Activated CD8-positive, alpha-beta T cell treated with anti-CD3 and anti-CD28 coated beads for 36 hours (primary cell): ENCODE measurements at regions of chr18 and their contacts with region 1.

Region 1: GRCh38 chr18:63439334-63439733 is 17.1 kb upstream of the VPS4B start:
- DNase-seq: peak; percentile 58
- ATAC-seq: peak; percentile 75
- H3K4me3 Mint-ChIP-seq: no peak overlapping the region
- H3K27ac Mint-ChIP-seq: no peak overlapping the region
- H3K4me1 Mint-ChIP-seq: no peaks in the 10 kb centered on the region
- H3K27me3 Mint-ChIP-seq: peaks cover 2% of the 10 kb centered on the region
- CTCF ChIP-seq: peak; percentile 92

Region 2: GRCh38 chr18:63339920-63340484 is 99.3 kb before region 1 on chr18:
- CTCF ChIA-PET with region 1: interaction called, 99 read pairs
- POLR2A ChIA-PET with region 1: no interaction called
- intact Hi-C with region 1: loop called (anchors 5 kb)
- DNase-seq: peak; percentile 75
- ATAC-seq: peak; percentile 66
- H3K4me3 Mint-ChIP-seq: no peak overlapping the region
- H3K27ac Mint-ChIP-seq: no peak overlapping the region
- H3K4me1 Mint-ChIP-seq: peaks cover 10% of the 10 kb centered on the region
- H3K27me3 Mint-ChIP-seq: no peaks in the 10 kb centered on the region
- CTCF ChIP-seq: peak; percentile 73

Region 3: GRCh38 chr18:63367053-63367953 is 72.0 kb before region 1 on chr18 and contains the start of gene KDSR:
- CTCF ChIA-PET with region 1: interaction called, 36 read pairs
- POLR2A ChIA-PET with region 1: interaction called, 3 read pairs
- intact Hi-C with region 1: no loop called
- DNase-seq: peak; percentile 86
- ATAC-seq: peak; percentile 84
- H3K4me3 Mint-ChIP-seq: peak within 1 kb of the TSS; percentile 81
- H3K27ac Mint-ChIP-seq: peak within 1 kb of the TSS; percentile 86
- H3K4me1 Mint-ChIP-seq: peaks cover 29% of the 10 kb centered on the region
- H3K27me3 Mint-ChIP-seq: no peaks in the 10 kb centered on the region
- CTCF ChIP-seq: no peak
- total RNA-seq, gene KDSR: 53.4 TPM

Region 4: DNA sequence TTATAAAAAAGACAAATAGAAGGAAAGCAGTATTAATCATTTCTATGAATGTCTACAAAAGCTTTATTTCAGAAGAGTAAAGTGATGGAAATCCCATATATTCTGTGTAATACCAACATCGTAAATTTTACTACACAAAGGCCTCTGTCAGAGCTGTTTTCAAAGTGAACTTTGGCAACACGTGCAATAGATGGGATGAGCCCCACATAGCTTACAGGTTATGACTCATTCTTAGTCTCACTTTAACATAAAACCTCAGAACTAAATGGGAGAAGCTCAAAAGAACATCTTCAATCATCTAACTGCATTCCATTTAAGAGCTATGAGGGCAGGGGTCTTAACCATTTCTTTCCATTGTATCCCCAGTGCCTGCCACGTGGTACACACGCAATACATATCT is 28.5 kb before region 1 on chr18:
- CTCF ChIA-PET with region 1: interaction called, 11 read pairs
- POLR2A ChIA-PET with region 1: no interaction called
- intact Hi-C with region 1: no loop called
- DNase-seq: no peak
- ATAC-seq: peak; percentile 84
- H3K4me3 Mint-ChIP-seq: no peak overlapping the region
- H3K27ac Mint-ChIP-seq: peak overlapping the region; percentile 84
- H3K4me1 Mint-ChIP-seq: peaks cover 53% of the 10 kb centered on the region
- H3K27me3 Mint-ChIP-seq: no peaks in the 10 kb centered on the region
- CTCF ChIP-seq: no peak

Region 5: GRCh38 chr18:63422087-63422809 is 17.1 kb before region 1 on chr18 and contains the start of gene VPS4B:
- CTCF ChIA-PET with region 1: interaction called, 59 read pairs
- POLR2A ChIA-PET with region 1: interaction called, 5 read pairs
- intact Hi-C with region 1: no loop called
- DNase-seq: peak; percentile 100
- ATAC-seq: peak; percentile 96
- H3K4me3 Mint-ChIP-seq: peak within 1 kb of the TSS; percentile 96
- H3K27ac Mint-ChIP-seq: peak within 1 kb of the TSS; percentile 99
- H3K4me1 Mint-ChIP-seq: peaks cover 25% of the 10 kb centered on the region
- H3K27me3 Mint-ChIP-seq: no peaks in the 10 kb centered on the region
- CTCF ChIP-seq: no peak
- total RNA-seq, gene VPS4B: 34.8 to 35.9 TPM

Region 6: GRCh38 chr18:63753676-63754075 is 314.3 kb after region 1 on chr18:
- CTCF ChIA-PET with region 1: no interaction called
- POLR2A ChIA-PET with region 1: no interaction called
- intact Hi-C with region 1: no loop called
- DNase-seq: no peak
- ATAC-seq: no peak
- H3K4me3 Mint-ChIP-seq: no peak overlapping the region
- H3K27ac Mint-ChIP-seq: no peak overlapping the region
- H3K4me1 Mint-ChIP-seq: no peaks in the 10 kb centered on the region
- H3K27me3 Mint-ChIP-seq: peaks cover 1% of the 10 kb centered on the region
- CTCF ChIP-seq: no peak